Naive thymus-derived CD4-positive, alpha-beta T cell (primary cell): ENCODE measurements at regions of chr9 and their contacts with region 1.

Region 1: GRCh38 chr9:21016701-21017491 is 14.5 kb downstream of the HACD4 start:
- DNase-seq: no peak
- ATAC-seq: no peak
- H3K4me3 ChIP-seq: no peak overlapping the region
- H3K4me3 Mint-ChIP-seq: no peak overlapping the region
- H3K27ac ChIP-seq: no peak overlapping the region
- H3K27ac Mint-ChIP-seq: peak overlapping the region in 3 of 9 donors; percentile 13 to 32 (median 17)
- H3K4me1 ChIP-seq: peaks cover 0 to 3% of the 10 kb centered on the region in 2 donors
- H3K4me1 Mint-ChIP-seq: peaks cover 0 to 33% (median 19%) of the 10 kb centered on the region in 7 donors
- H3K27me3 ChIP-seq: no peaks in the 10 kb centered on the region
- H3K27me3 Mint-ChIP-seq: no peaks in the 10 kb centered on the region

Region 2: GRCh38 chr9:21070171-21070571 is 53.3 kb after region 1 on chr9:
- CTCF ChIA-PET with region 1: no interaction called
- POLR2A ChIA-PET with region 1: no interaction called
- intact Hi-C with region 1: loop called in 1 of 2 experiments (anchors 5 kb)
- DNase-seq: no peak
- ATAC-seq: no peak
- H3K4me3 ChIP-seq: no peak overlapping the region
- H3K4me3 Mint-ChIP-seq: no peak overlapping the region
- H3K27ac ChIP-seq: no peak overlapping the region
- H3K27ac Mint-ChIP-seq: no peak overlapping the region
- H3K4me1 ChIP-seq: no peaks in the 10 kb centered on the region
- H3K4me1 Mint-ChIP-seq: peaks cover 0 to 6% (median 0%) of the 10 kb centered on the region in 7 donors
- H3K27me3 ChIP-seq: no peaks in the 10 kb centered on the region
- H3K27me3 Mint-ChIP-seq: peaks cover 0 to 22% (median 0%) of the 10 kb centered on the region in 5 donors